Naive thymus-derived CD4-positive, alpha-beta T cell (primary cell): ENCODE measurements at regions of chr4 and their contacts with region 1.

Region 1: GRCh38 chr4:55736605-55737183 is 82.9 kb upstream of the EXOC1L start:
- DNase-seq: no peak
- ATAC-seq: no peak
- H3K4me3 ChIP-seq: no peak overlapping the region
- H3K4me3 Mint-ChIP-seq: no peak overlapping the region
- H3K27ac ChIP-seq: no peak overlapping the region
- H3K27ac Mint-ChIP-seq: no peak overlapping the region
- H3K4me1 ChIP-seq: no peaks in the 10 kb centered on the region
- H3K4me1 Mint-ChIP-seq: no peaks in the 10 kb centered on the region
- H3K27me3 ChIP-seq: peaks cover 0 to 5% of the 10 kb centered on the region in 2 donors
- H3K27me3 Mint-ChIP-seq: peaks cover 31 to 59% (median 52%) of the 10 kb centered on the region in 5 donors

Region 2: DNA sequence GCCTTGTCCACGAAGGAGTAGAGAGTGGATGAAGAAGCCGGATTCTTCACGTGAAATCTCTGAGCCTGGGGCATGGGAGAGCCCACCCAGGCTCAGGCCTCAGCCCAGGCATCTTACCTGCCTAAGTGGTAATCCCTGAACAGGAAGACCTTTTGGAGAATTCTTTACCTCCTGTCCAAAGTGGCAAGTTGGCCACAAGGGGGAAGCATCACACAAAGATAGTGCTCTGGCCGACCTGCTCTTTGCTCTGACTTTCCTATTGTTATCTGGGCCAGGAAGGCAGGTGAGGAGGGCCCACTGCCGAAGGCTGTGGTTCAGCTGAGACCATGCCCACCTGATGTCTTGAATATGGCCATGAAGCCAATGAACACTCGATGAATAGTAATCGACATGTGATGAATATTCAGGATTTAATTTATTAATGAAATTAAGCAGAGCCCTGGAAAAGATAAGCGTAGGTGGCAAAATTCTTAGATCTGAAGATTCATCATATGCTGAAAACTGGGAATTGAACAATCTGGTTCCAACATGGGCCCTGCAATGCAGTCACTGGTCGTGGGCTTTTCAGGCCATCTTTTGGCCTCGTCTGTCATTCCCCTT is 1413.8 kb before region 1 on chr4:
- CTCF ChIA-PET with region 1: no interaction called
- POLR2A ChIA-PET with region 1: no interaction called
- intact Hi-C with region 1: loop called in 1 of 2 experiments (anchors 5 kb)
- DNase-seq: peak in 8 of 9 donors; percentile 8 to 52 (median 42)
- ATAC-seq: peak; percentile 54
- H3K4me3 ChIP-seq: no peak overlapping the region
- H3K4me3 Mint-ChIP-seq: no peak overlapping the region
- H3K27ac ChIP-seq: no peak overlapping the region
- H3K27ac Mint-ChIP-seq: no peak overlapping the region
- H3K4me1 ChIP-seq: no peaks in the 10 kb centered on the region
- H3K4me1 Mint-ChIP-seq: peaks cover 0 to 12% (median 0%) of the 10 kb centered on the region in 7 donors
- H3K27me3 ChIP-seq: no peaks in the 10 kb centered on the region
- H3K27me3 Mint-ChIP-seq: peaks cover 0 to 3% (median 0%) of the 10 kb centered on the region in 5 donors

Region 3: DNA sequence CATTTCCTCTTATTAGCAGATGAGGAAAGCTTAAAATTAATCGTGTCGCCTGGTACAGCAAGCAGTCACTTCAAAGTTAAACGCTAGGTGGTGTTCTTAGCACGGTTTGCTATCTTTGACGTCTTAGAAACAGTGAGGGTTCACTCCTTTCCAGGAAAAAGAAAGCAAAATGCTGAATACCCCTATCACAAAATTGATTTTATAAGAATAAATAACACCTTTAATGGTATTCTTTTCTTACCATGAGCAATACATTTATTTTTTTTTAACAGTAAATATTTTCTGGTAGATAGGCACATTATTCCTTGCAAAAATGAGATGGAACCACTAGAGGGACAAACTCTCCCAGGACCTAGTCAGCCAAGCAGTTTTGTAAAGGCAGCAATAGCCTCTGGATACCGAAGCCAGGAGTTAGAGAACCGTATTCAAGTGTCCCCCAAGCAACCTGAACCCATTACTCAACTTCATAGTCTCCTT is 765.2 kb before region 1 on chr4:
- CTCF ChIA-PET with region 1: no interaction called
- POLR2A ChIA-PET with region 1: no interaction called
- intact Hi-C with region 1: loop called in 1 of 2 experiments (anchors 5 kb)
- DNase-seq: peak in 4 of 9 donors; percentile 24 to 34 (median 32)
- ATAC-seq: peak; percentile 67
- H3K4me3 ChIP-seq: no peak overlapping the region
- H3K4me3 Mint-ChIP-seq: no peak overlapping the region
- H3K27ac ChIP-seq: no peak overlapping the region
- H3K27ac Mint-ChIP-seq: no peak overlapping the region
- H3K4me1 ChIP-seq: no peaks in the 10 kb centered on the region
- H3K4me1 Mint-ChIP-seq: no peaks in the 10 kb centered on the region
- H3K27me3 ChIP-seq: no peaks in the 10 kb centered on the region
- H3K27me3 Mint-ChIP-seq: peaks cover 0 to 13% (median 9%) of the 10 kb centered on the region in 5 donors

Region 4: DNA sequence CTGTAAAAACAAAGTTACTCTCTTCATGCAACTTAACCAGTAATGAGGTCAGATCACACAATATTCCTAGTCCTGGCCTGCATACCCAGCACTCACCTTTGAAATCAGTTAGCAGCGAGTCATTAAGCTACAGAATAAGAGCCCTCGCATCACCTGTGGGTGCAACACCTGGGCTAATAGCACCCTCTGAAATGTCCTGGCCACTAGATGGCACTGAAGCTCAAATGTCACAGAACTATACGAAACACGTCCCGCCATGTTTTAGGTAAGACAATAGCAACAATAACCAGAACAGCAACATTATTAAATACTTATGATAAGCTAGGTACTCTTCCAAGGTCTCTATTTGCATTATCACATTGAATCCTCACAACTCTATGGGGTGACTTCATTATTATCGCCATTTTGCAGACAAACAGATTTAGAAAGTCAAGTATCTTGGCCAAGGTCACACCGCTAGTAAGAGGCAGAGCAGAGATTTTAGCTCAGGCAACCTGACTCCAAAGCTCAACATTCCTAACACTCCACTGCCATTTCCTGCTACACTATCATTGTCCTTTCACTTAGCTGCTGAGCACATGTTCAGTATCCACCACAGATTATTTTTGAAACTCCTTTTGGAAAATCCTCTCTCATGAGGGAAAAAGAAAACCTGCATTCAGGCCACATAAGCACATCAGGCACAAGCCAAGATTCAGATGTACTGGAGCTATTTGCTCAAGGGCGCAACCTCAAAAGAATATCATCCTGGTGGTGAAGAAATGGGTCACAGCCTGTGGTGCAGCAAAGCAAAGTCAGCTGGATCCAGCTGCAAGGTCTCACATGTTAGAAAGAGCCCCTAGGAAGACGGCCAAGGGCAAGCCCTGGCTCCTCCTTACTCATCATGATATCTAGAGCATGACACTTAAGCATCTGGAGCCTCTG is 551.8 kb before region 1 on chr4:
- CTCF ChIA-PET with region 1: no interaction called
- POLR2A ChIA-PET with region 1: no interaction called
- intact Hi-C with region 1: loop called in 1 of 2 experiments (anchors 10 kb)
- DNase-seq: peak in 6 of 9 donors; percentile 4 to 22 (median 15)
- ATAC-seq: no peak
- H3K4me3 ChIP-seq: no peak overlapping the region
- H3K4me3 Mint-ChIP-seq: no peak overlapping the region
- H3K27ac ChIP-seq: no peak overlapping the region
- H3K27ac Mint-ChIP-seq: no peak overlapping the region
- H3K4me1 ChIP-seq: no peaks in the 10 kb centered on the region
- H3K4me1 Mint-ChIP-seq: no peaks in the 10 kb centered on the region
- H3K27me3 ChIP-seq: no peaks in the 10 kb centered on the region
- H3K27me3 Mint-ChIP-seq: peaks cover 0 to 23% (median 17%) of the 10 kb centered on the region in 5 donors

Region 5: GRCh38 chr4:55312489-55313101 is 424.1 kb before region 1 on chr4:
- CTCF ChIA-PET with region 1: interaction called, 3 read pairs
- POLR2A ChIA-PET with region 1: no interaction called
- intact Hi-C with region 1: loop called in 1 of 2 experiments (anchors 2 kb)
- DNase-seq: peak in 7 of 9 donors; percentile 6 to 34 (median 30)
- ATAC-seq: peak; percentile 68
- H3K4me3 ChIP-seq: no peak overlapping the region
- H3K4me3 Mint-ChIP-seq: no peak overlapping the region
- H3K27ac ChIP-seq: no peak overlapping the region
- H3K27ac Mint-ChIP-seq: no peak overlapping the region
- H3K4me1 ChIP-seq: no peaks in the 10 kb centered on the region
- H3K4me1 Mint-ChIP-seq: peaks cover 0 to 4% (median 0%) of the 10 kb centered on the region in 7 donors
- H3K27me3 ChIP-seq: no peaks in the 10 kb centered on the region
- H3K27me3 Mint-ChIP-seq: peaks cover 0 to 7% (median 0%) of the 10 kb centered on the region in 5 donors

Region 6: GRCh38 chr4:55345980-55346850 is 390.5 kb before region 1 on chr4 and contains the start of gene SRD5A3:
- CTCF ChIA-PET with region 1: no interaction called
- POLR2A ChIA-PET with region 1: no interaction called
- intact Hi-C with region 1: loop called (anchors 1 to 5 kb)
- DNase-seq: peak; percentile 53 to 92 (median 72)
- ATAC-seq: peak; percentile 97
- H3K4me3 ChIP-seq: peak within 1 kb of the TSS; percentile 79
- H3K4me3 Mint-ChIP-seq: peak within 1 kb of the TSS; percentile 83 to 94 (median 90)
- H3K27ac ChIP-seq: peak within 1 kb of the TSS; percentile 69
- H3K27ac Mint-ChIP-seq: peak within 1 kb of the TSS; percentile 70 to 91 (median 87)
- H3K4me1 ChIP-seq: peaks cover 6 to 8% of the 10 kb centered on the region in 2 donors
- H3K4me1 Mint-ChIP-seq: peaks cover 8 to 23% (median 19%) of the 10 kb centered on the region in 7 donors
- H3K27me3 ChIP-seq: no peaks in the 10 kb centered on the region
- H3K27me3 Mint-ChIP-seq: no peaks in the 10 kb centered on the region
- total RNA-seq, gene SRD5A3: 1.9 to 8.5 (median 4.5) TPM

Region 7: DNA sequence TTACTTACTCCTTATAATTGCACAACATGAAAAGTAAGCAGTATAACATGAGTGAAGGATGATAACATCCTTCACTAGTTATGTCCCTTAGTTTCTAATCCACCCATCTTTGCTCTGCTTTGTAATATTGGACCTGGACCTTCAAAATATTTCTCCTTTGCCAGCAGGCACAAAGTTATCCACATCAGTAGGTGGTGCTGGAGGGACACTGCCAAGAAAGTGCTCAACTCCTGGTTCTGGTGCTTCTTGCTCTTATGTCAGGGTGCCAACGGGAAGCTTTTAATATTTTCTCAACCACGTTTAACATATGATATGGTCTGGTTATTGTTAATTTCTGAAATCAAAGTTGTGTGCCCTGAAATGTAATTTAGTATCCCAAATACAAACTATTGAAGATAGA is 291.9 kb before region 1 on chr4:
- CTCF ChIA-PET with region 1: no interaction called
- POLR2A ChIA-PET with region 1: no interaction called
- intact Hi-C with region 1: loop called in 1 of 2 experiments (anchors 2 kb)
- DNase-seq: peak in 1 of 9 donors; percentile 7
- ATAC-seq: no peak
- H3K4me3 ChIP-seq: no peak overlapping the region
- H3K4me3 Mint-ChIP-seq: no peak overlapping the region
- H3K27ac ChIP-seq: no peak overlapping the region
- H3K27ac Mint-ChIP-seq: peak overlapping the region in 1 of 9 donors; percentile 51
- H3K4me1 ChIP-seq: no peaks in the 10 kb centered on the region
- H3K4me1 Mint-ChIP-seq: peaks cover 0 to 15% (median 11%) of the 10 kb centered on the region in 7 donors
- H3K27me3 ChIP-seq: no peaks in the 10 kb centered on the region
- H3K27me3 Mint-ChIP-seq: no peaks in the 10 kb centered on the region